ENCODE measurements at regions of chr1 and their contacts with region 1.

Region 1: GRCh38 chr1:69743146-69743545 is 175.4 kb downstream of the LRRC7 start:
- DNase-seq: no peak
- H3K4me3 ChIP-seq: no peak overlapping the region
- H3K27ac ChIP-seq: no peak overlapping the region
- H3K4me1 ChIP-seq: no peaks in the 10 kb centered on the region
- H3K27me3 ChIP-seq: no peaks in the 10 kb centered on the region
- CTCF ChIP-seq: no peak
- EP300 ChIP-seq: no peak
- POLR2A ChIP-seq: no peak

Region 2: DNA sequence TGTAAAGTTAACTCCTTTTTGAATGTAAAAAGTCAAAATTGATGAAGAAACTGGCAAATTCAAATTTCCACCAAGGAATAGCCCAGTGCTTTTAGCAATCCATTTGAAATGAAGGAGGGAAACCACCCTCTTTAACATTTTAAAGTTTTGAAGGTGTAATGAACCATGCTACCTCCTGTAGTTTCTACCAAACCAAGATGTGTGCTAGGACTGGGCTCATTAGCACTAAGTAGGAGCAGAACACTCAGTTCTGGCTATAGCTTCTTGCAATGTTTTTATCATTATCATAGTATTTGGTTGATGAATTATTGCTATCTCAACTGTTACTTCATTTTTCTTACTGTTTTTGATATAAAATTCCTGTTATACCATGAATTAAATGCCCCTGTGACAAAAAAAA is 1656.9 kb after region 1 on chr1:
- intact Hi-C with region 1: loop called in 1 of 4 experiments (anchors 5 kb)
- DNase-seq: no peak
- H3K4me3 ChIP-seq: no peak overlapping the region
- H3K27ac ChIP-seq: no peak overlapping the region
- H3K4me1 ChIP-seq: no peaks in the 10 kb centered on the region
- H3K27me3 ChIP-seq: no peaks in the 10 kb centered on the region
- CTCF ChIP-seq: no peak
- EP300 ChIP-seq: no peak
- POLR2A ChIP-seq: no peak